Activated B cell treated with CpG ODN at 0.5 μM for 24 hours (primary cell): ENCODE measurements at regions of chr3 and their contacts with region 1.

Region 1: GRCh38 chr3:101779047-101779821 is at the start of gene NXPE3:
- DNase-seq: peak; percentile 94
- ATAC-seq: peak; percentile 92
- H3K4me3 Mint-ChIP-seq: peak within 1 kb of the TSS; percentile 87
- H3K27ac Mint-ChIP-seq: peak within 1 kb of the TSS; percentile 94
- H3K4me1 Mint-ChIP-seq: peaks cover 31% of the 10 kb centered on the region
- H3K27me3 Mint-ChIP-seq: no peaks in the 10 kb centered on the region
- CTCF ChIP-seq: no peak
- total RNA-seq, gene NXPE3: 15.8 and 16.0 TPM in 2 replicates

Region 2: DNA sequence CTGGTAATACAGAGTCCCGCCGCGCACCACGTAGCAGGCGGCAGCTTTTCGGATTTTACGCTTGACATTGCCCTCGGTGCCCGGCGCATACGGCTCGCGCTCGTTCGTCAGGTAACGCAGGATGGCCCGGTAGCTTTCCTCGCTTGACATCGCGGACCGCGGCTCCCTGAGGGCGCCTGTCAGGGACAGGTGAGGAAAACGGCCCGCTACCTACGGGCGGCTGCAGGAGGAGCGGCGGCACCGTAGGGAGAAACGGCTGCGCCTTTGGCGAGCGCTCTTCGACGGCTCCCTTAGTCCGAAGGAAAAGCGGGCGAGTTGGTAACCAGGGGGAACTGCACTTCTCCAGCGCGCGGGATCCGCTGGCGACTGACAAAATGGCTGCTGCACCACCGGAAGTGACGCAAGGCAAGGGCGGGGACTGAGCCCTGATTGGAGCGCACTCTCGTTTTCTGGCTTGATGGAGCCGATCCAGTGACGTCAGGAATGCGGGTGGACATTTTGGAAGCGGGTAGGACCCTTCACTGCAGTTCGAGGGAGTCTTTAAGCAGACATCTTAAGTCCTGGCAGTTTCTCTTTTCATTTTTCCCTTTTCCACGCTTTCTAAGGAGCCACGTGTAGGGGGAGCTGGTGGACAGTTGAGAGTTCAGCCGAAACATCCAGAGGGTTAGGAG is 102.3 kb before region 1 on chr3 and contains the start of gene ZBTB11:
- CTCF ChIA-PET with region 1: no interaction called
- POLR2A ChIA-PET with region 1: interaction called, 9 read pairs
- intact Hi-C with region 1: loop called (anchors 1 kb)
- DNase-seq: peak; percentile 99
- ATAC-seq: peak; percentile 68
- H3K4me3 Mint-ChIP-seq: peak within 1 kb of the TSS; percentile 93
- H3K27ac Mint-ChIP-seq: peak within 1 kb of the TSS; percentile 96
- H3K4me1 Mint-ChIP-seq: peaks cover 56% of the 10 kb centered on the region
- H3K27me3 Mint-ChIP-seq: no peaks in the 10 kb centered on the region
- CTCF ChIP-seq: no peak
- total RNA-seq, gene ZBTB11: 26.2 and 28.7 TPM in 2 replicates

Region 3: GRCh38 chr3:101685870-101686412 is 93.3 kb before region 1 on chr3:
- CTCF ChIA-PET with region 1: no interaction called
- POLR2A ChIA-PET with region 1: interaction called, 10 read pairs
- intact Hi-C with region 1: loop called (anchors 2 kb)
- DNase-seq: no peak
- ATAC-seq: peak; percentile 6
- H3K4me3 Mint-ChIP-seq: peak overlapping the region; percentile 100
- H3K27ac Mint-ChIP-seq: peak overlapping the region; percentile 99
- H3K4me1 Mint-ChIP-seq: peaks cover 40% of the 10 kb centered on the region
- H3K27me3 Mint-ChIP-seq: no peaks in the 10 kb centered on the region
- CTCF ChIP-seq: no peak

Region 4: GRCh38 chr3:101791778-101792177 is 12.5 kb after region 1 on chr3:
- CTCF ChIA-PET with region 1: interaction called, 4 read pairs
- POLR2A ChIA-PET with region 1: interaction called, 11 read pairs
- intact Hi-C with region 1: loop called (anchors 1 kb)
- DNase-seq: no peak
- ATAC-seq: peak; percentile 90
- H3K4me3 Mint-ChIP-seq: peak overlapping the region; percentile 50
- H3K27ac Mint-ChIP-seq: peak overlapping the region; percentile 37
- H3K4me1 Mint-ChIP-seq: peaks cover 31% of the 10 kb centered on the region
- H3K27me3 Mint-ChIP-seq: no peaks in the 10 kb centered on the region
- CTCF ChIP-seq: no peak